Activated CD4-positive, alpha-beta T cell treated with anti-CD3 and anti-CD28 coated beads for 36 hours (primary cell): ENCODE measurements at regions of chr4 and their contacts with region 1.

Region 1: DNA sequence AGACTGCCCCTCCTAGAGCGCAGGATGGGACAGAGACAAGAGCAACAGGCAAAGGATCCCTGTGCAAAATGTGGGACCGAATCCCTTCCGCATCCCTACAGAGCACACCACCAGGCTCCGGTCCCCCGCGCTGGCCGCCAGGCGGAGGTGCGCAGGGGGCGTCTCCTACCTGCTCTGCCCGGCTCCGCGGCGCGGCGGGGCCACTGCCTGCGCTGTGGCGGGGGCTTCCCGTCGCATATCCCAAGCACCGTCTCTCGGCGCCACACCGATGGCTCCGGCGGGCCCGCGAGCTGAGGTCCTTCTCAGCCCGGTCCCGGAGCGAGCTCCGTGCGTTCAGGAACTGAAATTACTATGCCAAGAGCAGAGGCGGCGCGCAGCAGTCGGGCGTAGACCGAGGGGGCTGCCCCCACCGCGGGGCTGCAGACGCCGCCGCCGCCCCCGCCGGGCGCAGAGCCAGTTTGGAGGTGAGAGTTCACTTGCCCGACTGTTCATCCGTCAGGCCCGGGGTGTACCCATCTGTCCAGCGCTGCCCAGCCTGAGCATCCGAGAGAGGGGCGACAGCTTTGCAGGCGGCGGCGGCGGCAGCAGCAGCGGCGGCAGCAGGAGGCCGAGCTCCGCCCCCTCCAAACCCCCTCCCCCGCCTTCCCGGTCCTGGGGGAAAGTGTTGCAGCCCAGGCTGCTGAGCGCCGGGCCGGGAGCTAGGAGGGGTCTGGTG is at the start of gene GPRIN3:
- DNase-seq: peak; percentile 84
- ATAC-seq: peak; percentile 70
- H3K4me3 Mint-ChIP-seq: peak within 1 kb of the TSS; percentile 77
- H3K27ac Mint-ChIP-seq: peak within 1 kb of the TSS; percentile 93
- H3K4me1 Mint-ChIP-seq: peaks cover 59% of the 10 kb centered on the region
- H3K27me3 Mint-ChIP-seq: no peaks in the 10 kb centered on the region
- total RNA-seq, gene GPRIN3: 10.5 to 12.2 TPM

Region 2: GRCh38 chr4:89110986-89111832 is 196.4 kb before region 1 on chr4 and contains the start of gene TIGD2:
- CTCF ChIA-PET with region 1: no interaction called
- POLR2A ChIA-PET with region 1: no interaction called
- intact Hi-C with region 1: loop called in 1 of 2 experiments (anchors 5 kb)
- DNase-seq: peak; percentile 93
- ATAC-seq: peak; percentile 95
- H3K4me3 Mint-ChIP-seq: peak within 1 kb of the TSS; percentile 73
- H3K27ac Mint-ChIP-seq: peak within 1 kb of the TSS; percentile 86
- H3K4me1 Mint-ChIP-seq: peaks cover 18% of the 10 kb centered on the region
- H3K27me3 Mint-ChIP-seq: peaks cover 16% of the 10 kb centered on the region
- total RNA-seq, gene TIGD2: 2.1 to 2.3 TPM

Region 3: GRCh38 chr4:89254847-89255246 is 52.8 kb before region 1 on chr4:
- CTCF ChIA-PET with region 1: interaction called, 6 read pairs
- POLR2A ChIA-PET with region 1: no interaction called
- intact Hi-C with region 1: loop called in 1 of 2 experiments (anchors 2 kb)
- DNase-seq: peak; percentile 64
- ATAC-seq: peak; percentile 72
- H3K4me3 Mint-ChIP-seq: no peak overlapping the region
- H3K27ac Mint-ChIP-seq: peak overlapping the region; percentile 44
- H3K4me1 Mint-ChIP-seq: peaks cover 71% of the 10 kb centered on the region
- H3K27me3 Mint-ChIP-seq: no peaks in the 10 kb centered on the region

Region 4: GRCh38 chr4:89288430-89288829 is 19.2 kb before region 1 on chr4:
- CTCF ChIA-PET with region 1: interaction called, 4 read pairs
- POLR2A ChIA-PET with region 1: interaction called, 6 read pairs
- intact Hi-C with region 1: loop called in 1 of 2 experiments (anchors 2 kb)
- DNase-seq: no peak
- ATAC-seq: no peak
- H3K4me3 Mint-ChIP-seq: peak overlapping the region; percentile 67
- H3K27ac Mint-ChIP-seq: peak overlapping the region; percentile 94
- H3K4me1 Mint-ChIP-seq: peaks cover 95% of the 10 kb centered on the region
- H3K27me3 Mint-ChIP-seq: no peaks in the 10 kb centered on the region

Region 5: DNA sequence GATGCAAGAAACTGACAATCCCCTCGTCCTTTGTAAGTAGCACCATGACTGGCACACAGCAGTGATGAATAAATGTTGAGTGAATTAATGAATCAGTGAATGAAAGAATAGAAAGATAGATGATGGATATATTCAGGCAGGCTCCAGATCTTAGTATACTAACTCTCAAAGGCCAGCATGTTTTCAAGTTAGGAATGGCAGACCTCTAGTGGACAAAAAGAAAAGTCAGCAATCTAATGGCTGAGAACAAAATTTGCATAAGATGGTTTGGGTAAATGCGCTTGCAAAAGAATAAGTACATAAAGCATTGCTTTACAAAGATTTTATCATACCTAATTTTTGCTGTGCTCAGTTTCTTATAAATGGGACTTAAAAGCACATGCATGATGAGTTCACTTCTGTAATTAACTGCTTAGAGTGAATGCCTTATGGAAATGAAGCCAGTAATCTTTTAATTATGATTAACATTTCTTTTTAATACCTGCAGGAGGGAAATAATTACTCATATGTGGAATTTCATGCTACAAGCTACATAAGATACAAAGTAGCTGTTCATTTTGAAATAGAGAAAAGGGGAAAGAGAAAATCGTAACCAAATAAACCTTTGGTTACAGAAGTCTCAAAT is 126.9 kb after region 1 on chr4:
- CTCF ChIA-PET with region 1: no interaction called
- POLR2A ChIA-PET with region 1: no interaction called
- intact Hi-C with region 1: loop called in 1 of 2 experiments (anchors 5 kb)
- DNase-seq: no peak
- ATAC-seq: peak; percentile 75
- H3K4me3 Mint-ChIP-seq: no peak overlapping the region
- H3K27ac Mint-ChIP-seq: no peak overlapping the region
- H3K4me1 Mint-ChIP-seq: peaks cover 21% of the 10 kb centered on the region
- H3K27me3 Mint-ChIP-seq: peaks cover 2% of the 10 kb centered on the region

Region 6: GRCh38 chr4:89469930-89470375 is 162.3 kb after region 1 on chr4:
- CTCF ChIA-PET with region 1: no interaction called
- POLR2A ChIA-PET with region 1: no interaction called
- intact Hi-C with region 1: loop called in 1 of 2 experiments (anchors 5 kb)
- DNase-seq: peak; percentile 39
- ATAC-seq: peak; percentile 95
- H3K4me3 Mint-ChIP-seq: peak overlapping the region; percentile 29
- H3K27ac Mint-ChIP-seq: peak overlapping the region; percentile 83
- H3K4me1 Mint-ChIP-seq: peaks cover 25% of the 10 kb centered on the region
- H3K27me3 Mint-ChIP-seq: no peaks in the 10 kb centered on the region